Activated CD4-positive, alpha-beta T cell treated with anti-CD3 and anti-CD28 coated beads for 36 hours (primary cell): ENCODE measurements at regions of chr2 and their contacts with region 1.

Region 1: GRCh38 chr2:237464757-237465391 is 22.2 kb upstream of the MLPH start:
- DNase-seq: no peak
- ATAC-seq: no peak
- H3K4me3 Mint-ChIP-seq: no peak overlapping the region
- H3K27ac Mint-ChIP-seq: no peak overlapping the region
- H3K4me1 Mint-ChIP-seq: no peaks in the 10 kb centered on the region
- H3K27me3 Mint-ChIP-seq: no peaks in the 10 kb centered on the region

Region 2: GRCh38 chr2:237315170-237315828 is 149.6 kb before region 1 on chr2:
- CTCF ChIA-PET with region 1: no interaction called
- POLR2A ChIA-PET with region 1: no interaction called
- intact Hi-C with region 1: no loop called
- DNase-seq: no peak
- ATAC-seq: no peak
- H3K4me3 Mint-ChIP-seq: no peak overlapping the region
- H3K27ac Mint-ChIP-seq: no peak overlapping the region
- H3K4me1 Mint-ChIP-seq: no peaks in the 10 kb centered on the region
- H3K27me3 Mint-ChIP-seq: peaks cover 3% of the 10 kb centered on the region

Region 3: DNA sequence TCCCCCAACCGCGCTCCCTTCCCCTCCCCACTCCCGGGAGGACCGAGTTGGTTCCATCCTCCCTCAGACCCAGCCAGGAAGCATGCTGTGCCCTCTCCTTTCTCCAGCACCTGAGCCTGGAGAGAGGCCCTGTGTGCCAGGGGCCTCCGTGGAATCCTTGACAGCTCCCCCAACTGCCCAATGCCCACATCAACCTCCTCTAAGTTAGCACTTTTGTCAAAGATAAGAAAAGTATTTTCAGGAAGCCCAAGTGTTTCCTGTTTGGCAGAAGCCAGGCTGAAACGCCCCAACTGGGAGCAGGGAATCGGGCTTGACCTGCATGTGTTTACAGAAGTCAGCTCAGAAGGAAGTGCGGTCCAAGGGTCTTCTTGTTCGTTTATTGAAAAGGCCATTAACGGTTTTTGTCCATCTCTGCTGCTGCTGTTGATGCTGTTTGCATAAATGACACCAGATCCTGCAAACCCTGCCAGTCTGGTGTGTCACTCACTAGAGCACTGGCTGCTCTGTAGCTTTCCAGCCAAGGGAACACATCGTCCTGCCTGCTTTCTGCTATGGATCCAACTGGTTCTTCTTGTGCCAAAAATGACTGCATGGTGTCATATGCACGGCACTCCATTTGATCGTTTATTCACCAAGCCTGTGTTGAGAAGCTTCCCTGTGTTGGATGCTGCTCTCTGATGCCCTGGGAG is 15.5 kb before region 1 on chr2:
- CTCF ChIA-PET with region 1: no interaction called
- POLR2A ChIA-PET with region 1: no interaction called
- intact Hi-C with region 1: loop called in 1 of 2 experiments (anchors 1 kb)
- DNase-seq: peak; percentile 3
- ATAC-seq: no peak
- H3K4me3 Mint-ChIP-seq: no peak overlapping the region
- H3K27ac Mint-ChIP-seq: no peak overlapping the region
- H3K4me1 Mint-ChIP-seq: peaks cover 21% of the 10 kb centered on the region
- H3K27me3 Mint-ChIP-seq: no peaks in the 10 kb centered on the region